AG04450 (cell line): ENCODE measurements at regions of chr7 and their contacts with region 1.

Region 1: DNA sequence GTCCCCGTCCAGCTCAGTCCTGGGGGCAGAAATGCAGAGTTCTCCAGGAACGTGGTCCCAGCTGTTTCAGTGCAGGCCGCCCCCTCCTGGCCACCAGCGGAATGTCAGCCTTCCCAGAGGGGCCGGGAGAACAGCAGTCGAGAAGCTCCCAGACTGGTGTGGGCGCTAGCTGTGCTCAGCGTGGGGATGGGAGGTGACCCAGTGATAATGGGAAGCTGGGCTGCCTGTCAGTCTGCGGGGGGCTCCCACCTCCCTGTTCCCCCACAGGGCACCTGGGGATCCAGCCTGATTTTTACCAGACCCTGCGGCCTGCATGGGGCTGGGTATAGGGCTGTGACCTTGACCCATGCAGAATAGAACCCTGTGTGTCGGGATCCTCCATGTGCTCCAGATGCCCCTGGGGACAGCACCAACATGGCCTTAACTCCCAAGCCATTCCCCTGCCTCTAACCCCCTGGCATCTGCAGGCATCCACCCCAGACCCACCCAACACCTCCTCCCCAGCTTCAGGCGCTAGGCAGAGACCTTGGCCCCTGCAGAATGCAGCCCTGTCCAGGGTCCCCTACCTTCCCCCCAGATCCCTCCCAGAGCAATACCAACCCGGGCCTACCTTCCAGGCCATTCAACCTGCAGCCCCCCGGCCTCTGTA is 946 bp upstream of the ELN start:
- DNase-seq: no peak
- H3K4me3 ChIP-seq: no peak overlapping the region
- H3K27ac ChIP-seq: no peak overlapping the region
- H3K27me3 ChIP-seq: peaks cover 15% of the 10 kb centered on the region
- CTCF ChIP-seq: peak; percentile 93

Region 2: DNA sequence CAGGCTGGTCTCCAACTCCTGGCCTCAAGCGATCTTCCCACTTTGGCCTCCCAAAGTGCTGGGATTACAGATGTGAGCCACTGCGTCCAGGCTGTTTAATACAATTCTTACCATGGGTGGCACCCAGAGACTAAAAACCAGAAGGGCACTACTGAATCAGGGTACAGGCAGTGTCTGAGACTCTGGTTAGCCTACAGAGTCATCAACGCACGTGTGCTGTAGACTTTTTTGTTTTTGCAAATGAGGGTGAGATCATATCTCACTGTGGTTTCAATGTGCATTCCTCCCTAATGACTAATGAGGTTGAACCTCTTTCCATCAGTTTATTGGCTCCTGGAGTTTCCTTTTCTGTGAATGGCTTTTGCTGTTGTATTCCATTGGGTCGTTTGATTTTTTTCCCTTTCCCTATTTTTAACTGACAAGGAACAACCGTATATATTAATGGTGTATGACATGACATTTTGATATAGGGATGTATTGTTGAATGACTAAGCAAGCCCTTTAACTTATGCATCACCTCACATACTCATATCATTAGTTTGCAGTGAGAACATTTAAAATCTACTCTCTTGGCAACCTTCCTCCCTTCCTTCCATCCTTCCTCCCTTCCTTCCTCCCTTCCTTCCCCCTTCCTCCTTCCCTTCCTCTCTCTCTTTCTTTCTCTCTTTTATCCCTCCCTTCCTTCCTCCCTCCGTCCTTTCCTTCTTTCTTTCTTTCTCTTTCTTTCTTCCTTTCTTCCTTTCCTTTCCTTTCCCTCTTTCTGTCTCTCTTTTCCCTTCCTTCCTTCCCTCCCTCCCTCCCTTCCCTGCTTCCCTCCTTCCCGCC is 175.4 kb before region 1 on chr7:
- CTCF ChIA-PET with region 1: interaction called, 10 read pairs
- POLR2A ChIA-PET with region 1: no interaction called
- DNase-seq: peak; percentile 94
- H3K4me3 ChIP-seq: peak overlapping the region; percentile 29; the same call in 1 of the 2 replicates
- H3K27ac ChIP-seq: peak overlapping the region; percentile 100
- H3K27me3 ChIP-seq: no peaks in the 10 kb centered on the region
- CTCF ChIP-seq: no peak

Region 3: GRCh38 chr7:73879977-73880681 is 146.9 kb before region 1 on chr7:
- CTCF ChIA-PET with region 1: interaction called, 14 read pairs
- POLR2A ChIA-PET with region 1: no interaction called
- DNase-seq: no peak
- H3K4me3 ChIP-seq: no peak overlapping the region
- H3K27ac ChIP-seq: peak overlapping the region; percentile 31
- H3K27me3 ChIP-seq: peaks cover 3% of the 10 kb centered on the region
- CTCF ChIP-seq: no peak

Region 4: GRCh38 chr7:73960548-73960947 is 66.5 kb before region 1 on chr7:
- CTCF ChIA-PET with region 1: interaction called, 10 read pairs
- POLR2A ChIA-PET with region 1: no interaction called
- DNase-seq: no peak
- H3K4me3 ChIP-seq: no peak overlapping the region
- H3K27ac ChIP-seq: no peak overlapping the region
- H3K27me3 ChIP-seq: no peaks in the 10 kb centered on the region
- CTCF ChIP-seq: no peak

Region 5: GRCh38 chr7:74012842-74013249 is 14.2 kb before region 1 on chr7:
- CTCF ChIA-PET with region 1: interaction called, 25 read pairs
- POLR2A ChIA-PET with region 1: no interaction called
- DNase-seq: no peak
- H3K4me3 ChIP-seq: no peak overlapping the region
- H3K27ac ChIP-seq: no peak overlapping the region
- H3K27me3 ChIP-seq: no peaks in the 10 kb centered on the region
- CTCF ChIP-seq: no peak

Region 6: DNA sequence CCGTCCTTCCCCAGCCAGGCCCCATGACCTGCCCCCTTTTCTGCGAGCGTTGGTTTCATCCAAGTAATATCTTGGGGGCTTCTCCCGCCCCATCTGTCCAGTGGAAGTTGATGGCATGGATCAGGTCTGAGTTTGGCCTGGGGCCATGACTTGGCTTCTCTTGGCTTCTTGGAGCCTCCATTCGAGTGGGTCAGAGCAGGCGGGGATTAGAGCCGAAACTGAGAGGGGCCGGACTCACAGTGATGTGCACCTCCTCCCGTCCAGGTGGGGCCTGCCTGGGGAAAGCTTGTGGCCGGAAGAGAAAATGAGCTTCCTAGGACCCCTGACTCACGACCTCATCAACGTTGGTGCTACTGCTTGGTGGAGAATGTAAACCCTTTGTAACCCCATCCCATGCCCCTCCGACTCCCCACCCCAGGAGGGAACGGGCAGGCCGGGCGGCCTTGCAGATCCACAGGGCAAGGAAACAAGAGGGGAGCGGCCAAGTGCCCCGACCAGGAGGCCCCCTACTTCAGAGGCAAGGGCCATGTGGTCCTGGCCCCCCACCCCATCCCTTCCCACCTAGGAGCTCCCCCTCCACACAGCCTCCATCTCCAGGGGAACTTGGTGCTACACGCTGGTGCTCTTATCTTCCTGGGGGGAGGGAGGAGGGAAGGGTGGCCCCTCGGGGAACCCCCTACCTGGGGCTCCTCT is 41.5 kb after region 1 on chr7:
- CTCF ChIA-PET with region 1: interaction called, 11 read pairs
- POLR2A ChIA-PET with region 1: no interaction called
- DNase-seq: no peak
- H3K4me3 ChIP-seq: no peak overlapping the region
- H3K27ac ChIP-seq: no peak overlapping the region
- H3K27me3 ChIP-seq: no peaks in the 10 kb centered on the region
- CTCF ChIP-seq: no peak

Region 7: GRCh38 chr7:74306730-74307469 is 279.9 kb after region 1 on chr7:
- CTCF ChIA-PET with region 1: no interaction called
- POLR2A ChIA-PET with region 1: no interaction called
- DNase-seq: no peak
- H3K4me3 ChIP-seq: no peak overlapping the region
- H3K27ac ChIP-seq: peak overlapping the region; percentile 47
- H3K27me3 ChIP-seq: no peaks in the 10 kb centered on the region
- CTCF ChIP-seq: no peak